ENCODE measurements at regions of chr14 and their contacts with region 1.

Region 1: DNA sequence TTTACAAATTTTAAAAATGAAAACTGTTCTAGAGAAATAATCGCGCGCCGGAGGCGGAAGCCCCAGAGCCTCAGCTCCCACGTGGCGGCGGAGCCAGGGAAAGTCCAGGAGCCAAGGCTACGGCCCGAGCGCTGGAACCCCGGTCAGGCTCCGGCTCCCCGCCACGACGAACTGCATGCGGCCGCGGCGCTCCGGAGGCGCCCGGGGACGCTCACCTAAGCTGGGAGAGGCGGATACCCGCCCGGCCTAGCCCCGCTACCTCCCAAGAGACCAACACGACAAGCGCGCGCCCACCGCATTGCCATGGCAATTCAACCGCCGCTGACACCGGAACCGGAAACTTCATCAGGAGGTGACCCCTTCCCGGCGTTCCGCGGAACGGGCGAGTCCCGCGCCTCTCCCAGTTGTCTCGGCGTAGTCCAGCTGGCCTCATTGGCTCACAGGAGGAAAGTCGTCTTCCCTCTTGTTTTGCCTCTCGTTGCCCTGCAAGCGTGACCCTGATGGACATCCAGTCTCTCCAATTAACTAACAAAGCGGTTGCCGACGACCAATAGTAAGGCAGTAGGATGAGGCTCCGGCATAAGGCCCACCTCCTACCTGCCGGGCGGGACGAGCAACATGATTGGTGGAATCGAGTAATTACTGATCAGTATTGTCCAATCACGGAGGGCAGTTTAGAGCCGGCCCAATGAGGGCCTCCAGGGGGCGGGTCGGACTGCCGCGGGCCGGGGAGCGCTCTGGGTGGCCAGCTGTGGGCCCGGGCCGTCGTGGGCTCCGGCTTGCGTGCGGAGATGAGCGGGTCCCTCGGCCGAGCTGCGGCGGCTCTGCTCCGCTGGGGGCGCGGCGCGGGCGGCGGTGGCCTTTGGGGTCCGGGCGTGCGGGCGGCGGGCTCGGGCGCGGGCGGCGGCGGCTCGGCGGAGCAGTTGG is at the start of gene GLRX5:
- DNase-seq: peak; percentile 100
- H3K4me3 ChIP-seq: peak within 1 kb of the TSS; percentile 70 to 78 (median 71)
- H3K27ac ChIP-seq: peak within 1 kb of the TSS; percentile 49
- H3K4me1 ChIP-seq: peaks cover 52% of the 10 kb centered on the region
- H3K27me3 ChIP-seq: no peaks in the 10 kb centered on the region
- CTCF ChIP-seq: no peak
- POLR2A ChIP-seq: peak; percentile 65
- total RNA-seq, gene GLRX5: 50.9 and 52.0 TPM in 2 replicates

Region 2: GRCh38 chr14:95265106-95266094 is 269.2 kb before region 1 on chr14:
- CTCF ChIA-PET with region 1: no interaction called
- POLR2A ChIA-PET with region 1: no interaction called
- dilution Hi-C with region 1: no loop called
- intact Hi-C with region 1: loop called (anchors 10 kb)
- DNase-seq: peak; percentile 96
- H3K4me3 ChIP-seq: peak overlapping the region in 1 of 3 experiments; percentile 37
- H3K27ac ChIP-seq: peak overlapping the region; percentile 98
- H3K4me1 ChIP-seq: peaks cover 23% of the 10 kb centered on the region
- H3K27me3 ChIP-seq: no peaks in the 10 kb centered on the region
- CTCF ChIP-seq: no peak
- POLR2A ChIP-seq: no peak

Region 3: GRCh38 chr14:95483309-95484165 is 51.0 kb before region 1 on chr14:
- CTCF ChIA-PET with region 1: no interaction called
- POLR2A ChIA-PET with region 1: no interaction called
- dilution Hi-C with region 1: no loop called
- intact Hi-C with region 1: loop called (anchors 1 kb)
- DNase-seq: peak; percentile 98
- H3K4me3 ChIP-seq: no peak overlapping the region
- H3K27ac ChIP-seq: peak overlapping the region; percentile 18
- H3K4me1 ChIP-seq: peaks cover 13% of the 10 kb centered on the region
- H3K27me3 ChIP-seq: no peaks in the 10 kb centered on the region
- CTCF ChIP-seq: no peak
- POLR2A ChIP-seq: no peak

Region 4: DNA sequence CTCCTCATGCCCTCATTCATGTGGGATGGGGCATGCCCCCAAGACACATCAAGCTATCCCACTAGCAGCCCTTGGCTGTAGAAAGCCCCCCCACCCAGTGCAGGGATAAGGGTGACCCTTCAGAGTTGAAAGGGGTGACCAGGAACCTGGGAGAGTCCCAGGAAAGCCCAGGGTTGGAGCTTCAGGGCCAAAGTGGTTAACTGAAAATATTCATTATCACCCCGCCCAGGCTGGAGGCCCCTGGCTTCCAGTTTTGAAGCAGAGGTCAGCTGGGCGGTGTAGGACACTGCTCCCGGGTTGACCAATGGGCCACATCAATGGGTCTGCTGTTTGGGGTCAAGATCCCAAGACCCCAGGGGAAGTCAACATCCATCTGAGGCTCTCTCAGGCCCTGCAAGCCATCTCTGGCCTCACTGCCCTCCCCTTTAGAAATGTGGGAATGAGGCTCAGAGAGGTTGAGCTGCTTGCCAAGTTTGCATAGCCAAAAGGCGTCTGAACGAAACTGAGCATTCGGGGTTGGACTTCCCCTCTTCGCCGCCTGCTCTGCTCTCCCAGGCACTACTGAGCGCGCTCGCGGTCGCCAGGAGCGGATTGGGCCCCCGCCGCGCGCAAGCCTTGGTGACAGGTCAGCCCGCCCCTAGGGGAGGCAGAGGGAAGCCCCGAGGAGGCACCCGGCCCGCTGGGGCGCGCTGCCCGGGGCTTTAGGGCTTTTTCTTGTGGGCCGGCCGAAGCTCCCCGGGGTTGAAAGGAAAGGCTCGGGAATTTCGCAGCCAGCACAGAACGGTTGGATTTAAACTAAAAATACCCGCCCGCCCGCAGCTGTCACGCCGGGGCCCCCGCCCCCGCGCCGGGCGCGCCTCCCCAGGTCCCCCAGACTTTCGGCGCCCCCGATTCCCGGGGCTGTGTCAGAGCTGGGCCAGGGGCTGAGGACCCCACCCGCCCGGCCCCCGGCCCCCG is 18.7 kb before region 1 on chr14:
- CTCF ChIA-PET with region 1: interaction called, 79 read pairs
- POLR2A ChIA-PET with region 1: no interaction called
- dilution Hi-C with region 1: no loop called
- intact Hi-C with region 1: loop called (anchors 1 kb)
- DNase-seq: peak; percentile 49
- H3K4me3 ChIP-seq: peak overlapping the region; percentile 51 to 58 (median 52)
- H3K27ac ChIP-seq: no peak overlapping the region
- H3K4me1 ChIP-seq: peaks cover 55% of the 10 kb centered on the region
- H3K27me3 ChIP-seq: no peaks in the 10 kb centered on the region
- CTCF ChIP-seq: peak; percentile 24 to 57
- POLR2A ChIP-seq: no peak

Region 5: DNA sequence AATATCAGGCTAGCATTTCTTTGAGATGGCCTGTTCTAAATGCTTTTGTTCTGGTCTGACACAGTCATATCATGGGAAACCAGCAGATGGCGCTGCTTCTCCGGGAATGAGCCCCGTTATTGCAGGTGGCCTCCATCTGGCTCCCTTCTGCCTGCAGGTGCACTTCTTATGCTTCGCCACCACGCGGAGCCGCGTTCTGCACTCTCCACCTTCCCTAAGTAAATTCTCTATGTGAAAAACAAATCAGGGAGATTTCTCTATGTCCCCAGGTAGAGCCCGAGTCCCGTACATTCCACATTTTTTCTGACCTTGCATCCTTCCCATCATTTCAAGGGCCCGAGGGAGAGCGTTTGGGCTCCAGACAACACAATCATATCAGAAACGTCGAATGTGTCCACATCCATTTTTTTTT is 26.4 kb after region 1 on chr14:
- CTCF ChIA-PET with region 1: interaction called, 12 read pairs
- POLR2A ChIA-PET with region 1: no interaction called
- dilution Hi-C with region 1: no loop called
- intact Hi-C with region 1: loop called (anchors 1 kb)
- DNase-seq: peak; percentile 86
- H3K4me3 ChIP-seq: no peak overlapping the region
- H3K27ac ChIP-seq: no peak overlapping the region
- H3K4me1 ChIP-seq: no peaks in the 10 kb centered on the region
- H3K27me3 ChIP-seq: no peaks in the 10 kb centered on the region
- CTCF ChIP-seq: peak; percentile 90 to 96
- POLR2A ChIP-seq: no peak

Region 6: GRCh38 chr14:95722525-95723190 is 188.1 kb after region 1 on chr14:
- CTCF ChIA-PET with region 1: no interaction called
- POLR2A ChIA-PET with region 1: no interaction called
- dilution Hi-C with region 1: no loop called
- intact Hi-C with region 1: no loop called
- DNase-seq: no peak
- H3K4me3 ChIP-seq: no peak overlapping the region
- H3K27ac ChIP-seq: no peak overlapping the region
- H3K4me1 ChIP-seq: no peaks in the 10 kb centered on the region
- H3K27me3 ChIP-seq: no peaks in the 10 kb centered on the region
- CTCF ChIP-seq: no peak
- POLR2A ChIP-seq: no peak